Sciatic nerve (tissue), 2 donors: ENCODE measurements at regions of chr4 and their contacts with region 1.

Region 1: GRCh38 chr4:108303488-108304177 is 134.9 kb upstream of the LEF1 start:
- DNase-seq: no peak
- ATAC-seq: no peak

Region 2: GRCh38 chr4:106569146-106570031 is 1734.2 kb before region 1 on chr4:
- intact Hi-C with region 1: loop called (anchors 10 kb)
- DNase-seq: no peak
- ATAC-seq: peak; percentile 44

Region 3: DNA sequence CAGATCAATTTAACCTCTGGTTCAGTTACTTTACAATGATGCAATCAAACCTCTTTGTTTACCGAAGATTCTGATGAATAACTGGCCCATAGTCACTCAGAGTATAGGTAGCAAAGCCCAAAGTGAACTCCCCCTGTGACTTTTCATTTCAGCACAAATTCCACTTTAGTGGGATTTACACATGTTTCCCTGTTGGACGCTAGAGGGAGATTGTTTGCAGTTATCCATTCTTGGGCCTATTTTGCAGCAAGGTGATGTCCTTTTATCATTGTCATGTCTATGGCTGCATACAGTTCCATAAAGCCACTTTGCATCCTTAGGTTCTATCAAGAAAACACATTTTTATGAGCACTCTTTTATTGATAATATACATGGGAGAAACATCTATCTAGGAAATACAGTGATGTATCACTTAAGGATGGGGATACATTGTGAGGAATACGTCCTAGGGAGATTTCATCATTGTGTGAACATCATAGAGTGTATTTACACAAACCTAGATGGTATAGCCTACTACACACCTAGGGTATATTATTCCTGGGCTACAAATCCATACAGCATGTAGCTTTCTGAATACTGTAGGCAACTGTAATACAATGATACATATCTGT is 1253.0 kb before region 1 on chr4:
- intact Hi-C with region 1: no loop called
- DNase-seq: no peak
- ATAC-seq: no peak

Region 4: DNA sequence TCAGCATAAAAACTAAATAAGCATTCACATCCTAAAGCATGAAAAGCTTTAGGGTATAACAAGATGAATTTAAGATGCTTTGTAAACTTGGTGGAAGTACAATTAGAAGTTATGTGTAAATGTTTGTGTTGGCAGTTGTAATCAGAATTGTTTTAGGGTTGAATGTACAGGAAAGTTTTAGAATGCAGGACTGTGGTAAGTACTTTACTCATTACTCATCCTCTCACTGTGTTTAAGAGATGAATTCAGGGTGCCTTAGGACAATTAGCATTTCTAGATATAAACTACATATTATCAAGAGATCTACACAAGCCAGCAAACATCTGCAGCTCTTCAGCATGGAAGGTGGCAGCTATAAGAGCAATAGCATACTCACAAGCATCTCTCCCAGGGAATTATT is 1972.2 kb after region 1 on chr4:
- intact Hi-C with region 1: no loop called
- DNase-seq: no peak
- ATAC-seq: no peak